B cell (primary cell): ENCODE measurements at regions of chr15 and their contacts with region 1.

Region 1: GRCh38 chr15:99282121-99282520 is 30.8 kb downstream of the LRRC28 start:
- DNase-seq: no peak
- ATAC-seq: no peak
- H3K4me3 ChIP-seq: no peak overlapping the region
- H3K4me3 Mint-ChIP-seq: no peak overlapping the region
- H3K27ac ChIP-seq: no peak overlapping the region
- H3K27ac Mint-ChIP-seq: no peak overlapping the region
- H3K4me1 ChIP-seq: no peaks in the 10 kb centered on the region
- H3K4me1 Mint-ChIP-seq: peaks cover 9% of the 10 kb centered on the region
- H3K27me3 ChIP-seq: no peaks in the 10 kb centered on the region
- H3K27me3 Mint-ChIP-seq: no peaks in the 10 kb centered on the region
- CTCF ChIP-seq: no peak

Region 2: GRCh38 chr15:99123706-99124451 is 158.2 kb before region 1 on chr15:
- CTCF ChIA-PET with region 1: no interaction called
- POLR2A ChIA-PET with region 1: no interaction called
- intact Hi-C with region 1: no loop called
- DNase-seq: no peak
- ATAC-seq: no peak
- H3K4me3 ChIP-seq: no peak overlapping the region
- H3K4me3 Mint-ChIP-seq: no peak overlapping the region
- H3K27ac ChIP-seq: no peak overlapping the region
- H3K27ac Mint-ChIP-seq: no peak overlapping the region
- H3K4me1 ChIP-seq: no peaks in the 10 kb centered on the region
- H3K4me1 Mint-ChIP-seq: no peaks in the 10 kb centered on the region
- H3K27me3 ChIP-seq: peaks cover 0 to 3% (median 0%) of the 10 kb centered on the region in 4 experiments
- H3K27me3 Mint-ChIP-seq: peaks cover 5% of the 10 kb centered on the region
- CTCF ChIP-seq: no peak

Region 3: GRCh38 chr15:99371180-99372103 is 89.3 kb after region 1 on chr15:
- CTCF ChIA-PET with region 1: interaction called, 16 read pairs
- POLR2A ChIA-PET with region 1: no interaction called
- intact Hi-C with region 1: no loop called
- DNase-seq: peak; percentile 33
- ATAC-seq: no peak
- H3K4me3 ChIP-seq: no peak overlapping the region
- H3K4me3 Mint-ChIP-seq: peak overlapping the region; percentile 41
- H3K27ac ChIP-seq: no peak overlapping the region
- H3K27ac Mint-ChIP-seq: peak overlapping the region; percentile 32
- H3K4me1 ChIP-seq: peaks cover 6 to 8% of the 10 kb centered on the region in 2 donors
- H3K4me1 Mint-ChIP-seq: peaks cover 13% of the 10 kb centered on the region
- H3K27me3 ChIP-seq: no peaks in the 10 kb centered on the region
- H3K27me3 Mint-ChIP-seq: no peaks in the 10 kb centered on the region
- CTCF ChIP-seq: no peak

Region 4: GRCh38 chr15:99669214-99669613 is 387.1 kb after region 1 on chr15:
- CTCF ChIA-PET with region 1: interaction called, 10 read pairs
- POLR2A ChIA-PET with region 1: no interaction called
- intact Hi-C with region 1: no loop called
- DNase-seq: no peak
- ATAC-seq: no peak
- H3K4me3 ChIP-seq: no peak overlapping the region
- H3K4me3 Mint-ChIP-seq: no peak overlapping the region
- H3K27ac ChIP-seq: peak overlapping the region in 1 of 2 donors; percentile 2
- H3K27ac Mint-ChIP-seq: no peak overlapping the region
- H3K4me1 ChIP-seq: no peaks in the 10 kb centered on the region
- H3K4me1 Mint-ChIP-seq: peaks cover 1% of the 10 kb centered on the region
- H3K27me3 ChIP-seq: no peaks in the 10 kb centered on the region
- H3K27me3 Mint-ChIP-seq: no peaks in the 10 kb centered on the region
- CTCF ChIP-seq: no peak

Region 5: DNA sequence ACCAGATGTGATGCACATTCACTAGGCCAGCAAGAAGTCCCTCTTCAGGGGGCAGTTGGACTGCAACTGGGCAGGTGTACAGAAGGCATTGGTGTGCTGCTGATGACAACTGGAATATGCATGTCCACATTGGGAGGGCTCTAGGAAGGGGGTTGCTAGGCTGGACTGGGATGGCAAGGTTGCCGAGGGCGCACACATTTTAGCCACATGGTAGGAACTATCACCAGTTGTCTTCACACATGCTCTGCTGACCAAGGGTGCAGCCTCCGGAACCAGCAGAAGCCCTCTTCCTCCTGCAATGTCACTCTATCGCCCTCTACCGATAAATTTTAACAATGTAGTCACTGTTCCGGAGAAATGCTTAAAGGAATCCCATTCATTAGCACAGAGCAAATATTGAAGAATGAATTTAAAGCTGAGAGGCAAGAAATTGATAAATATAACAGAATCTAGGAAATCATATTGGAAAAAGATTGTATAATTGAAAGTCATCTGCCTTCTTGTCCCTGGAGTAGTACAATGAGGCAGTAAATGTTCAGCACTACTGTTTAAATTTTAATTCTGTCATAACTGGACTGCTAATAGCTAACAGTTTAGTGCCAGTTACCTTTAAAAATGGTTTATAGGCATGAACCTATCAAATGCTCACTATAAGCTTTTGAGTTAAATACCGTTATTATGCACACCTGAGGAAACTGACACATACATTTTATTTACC is 473.7 kb after region 1 on chr15:
- CTCF ChIA-PET with region 1: interaction called, 153 read pairs
- POLR2A ChIA-PET with region 1: no interaction called
- intact Hi-C with region 1: loop called (anchors 1 kb)
- DNase-seq: peak; percentile 82
- ATAC-seq: peak; percentile 92
- H3K4me3 ChIP-seq: no peak overlapping the region
- H3K4me3 Mint-ChIP-seq: no peak overlapping the region
- H3K27ac ChIP-seq: no peak overlapping the region
- H3K27ac Mint-ChIP-seq: no peak overlapping the region
- H3K4me1 ChIP-seq: peaks cover 5 to 6% of the 10 kb centered on the region in 2 donors
- H3K4me1 Mint-ChIP-seq: peaks cover 7% of the 10 kb centered on the region
- H3K27me3 ChIP-seq: no peaks in the 10 kb centered on the region
- H3K27me3 Mint-ChIP-seq: peaks cover 3% of the 10 kb centered on the region
- CTCF ChIP-seq: peak; percentile 96